ENCODE measurements at regions of chr18 and their contacts with region 1.

Region 1: DNA sequence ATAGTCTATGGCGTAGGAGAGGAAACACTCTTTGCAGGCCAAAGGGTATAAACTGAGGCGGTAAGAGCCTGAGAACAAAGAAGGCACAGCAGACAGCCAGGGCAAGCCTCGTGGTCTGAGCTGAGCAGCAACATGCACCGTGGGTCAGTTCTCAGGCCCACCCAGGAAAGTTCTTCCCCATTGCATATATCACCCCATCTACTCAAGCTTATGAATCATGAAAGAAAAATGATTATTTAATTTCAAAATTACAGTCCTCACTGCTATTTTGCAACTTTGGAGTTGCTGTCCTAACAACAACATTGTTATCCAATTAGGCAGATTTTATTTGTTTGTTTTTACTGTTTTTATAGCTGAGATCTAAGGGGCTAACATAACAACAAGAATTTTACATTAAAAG is 54.7 kb upstream of the RIOK3 start:
- DNase-seq: no peak
- ATAC-seq: no peak
- H3K4me3 ChIP-seq: no peak overlapping the region
- H3K27ac ChIP-seq: no peak overlapping the region
- H3K4me1 ChIP-seq: peaks cover 0 to 3% of the 10 kb centered on the region in 2 donors
- H3K27me3 ChIP-seq: no peaks in the 10 kb centered on the region
- CTCF ChIP-seq: no peak

Region 2: DNA sequence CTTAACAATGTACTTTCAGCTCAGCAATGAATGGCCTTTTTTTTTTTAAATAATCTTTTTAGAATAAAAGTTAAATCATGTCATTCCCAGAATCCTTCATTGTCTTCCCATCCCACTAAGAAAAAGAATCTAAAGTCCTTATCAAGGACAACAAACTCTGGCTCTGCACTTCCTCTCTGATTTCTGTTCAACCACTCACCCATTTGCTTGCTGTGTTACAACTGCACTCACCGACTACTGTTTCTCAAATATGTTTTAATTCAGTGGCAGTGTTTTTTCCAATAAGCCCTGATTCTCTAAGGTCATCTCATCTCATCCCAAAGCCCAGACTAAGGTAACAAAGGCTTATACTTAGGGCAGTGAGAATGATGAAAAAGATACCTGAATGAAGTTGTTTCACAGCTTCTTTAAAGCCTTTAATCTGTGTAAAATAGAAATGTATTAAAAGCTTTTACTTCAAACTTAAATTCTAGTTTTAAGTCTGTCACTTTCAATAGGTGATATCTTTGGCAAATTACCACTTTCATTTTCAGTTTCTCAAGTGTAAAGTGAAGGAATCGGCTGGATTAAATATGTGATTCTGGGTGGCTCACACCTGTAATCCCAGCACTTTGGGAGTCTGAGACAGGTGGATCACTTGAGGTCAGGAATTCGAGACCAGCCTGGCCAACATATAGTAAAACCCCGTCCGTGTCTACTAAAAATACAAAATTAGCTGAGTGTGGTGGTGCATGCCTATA is 377.7 kb before region 1 on chr18:
- intact Hi-C with region 1: loop called in 1 of 2 experiments (anchors 10 kb)
- DNase-seq: no peak
- ATAC-seq: peak; percentile 19
- H3K4me3 ChIP-seq: no peak overlapping the region
- H3K27ac ChIP-seq: peak overlapping the region in 1 of 2 donors; percentile 13
- H3K4me1 ChIP-seq: peaks cover 0 to 5% of the 10 kb centered on the region in 2 donors
- H3K27me3 ChIP-seq: no peaks in the 10 kb centered on the region
- CTCF ChIP-seq: no peak

Region 3: DNA sequence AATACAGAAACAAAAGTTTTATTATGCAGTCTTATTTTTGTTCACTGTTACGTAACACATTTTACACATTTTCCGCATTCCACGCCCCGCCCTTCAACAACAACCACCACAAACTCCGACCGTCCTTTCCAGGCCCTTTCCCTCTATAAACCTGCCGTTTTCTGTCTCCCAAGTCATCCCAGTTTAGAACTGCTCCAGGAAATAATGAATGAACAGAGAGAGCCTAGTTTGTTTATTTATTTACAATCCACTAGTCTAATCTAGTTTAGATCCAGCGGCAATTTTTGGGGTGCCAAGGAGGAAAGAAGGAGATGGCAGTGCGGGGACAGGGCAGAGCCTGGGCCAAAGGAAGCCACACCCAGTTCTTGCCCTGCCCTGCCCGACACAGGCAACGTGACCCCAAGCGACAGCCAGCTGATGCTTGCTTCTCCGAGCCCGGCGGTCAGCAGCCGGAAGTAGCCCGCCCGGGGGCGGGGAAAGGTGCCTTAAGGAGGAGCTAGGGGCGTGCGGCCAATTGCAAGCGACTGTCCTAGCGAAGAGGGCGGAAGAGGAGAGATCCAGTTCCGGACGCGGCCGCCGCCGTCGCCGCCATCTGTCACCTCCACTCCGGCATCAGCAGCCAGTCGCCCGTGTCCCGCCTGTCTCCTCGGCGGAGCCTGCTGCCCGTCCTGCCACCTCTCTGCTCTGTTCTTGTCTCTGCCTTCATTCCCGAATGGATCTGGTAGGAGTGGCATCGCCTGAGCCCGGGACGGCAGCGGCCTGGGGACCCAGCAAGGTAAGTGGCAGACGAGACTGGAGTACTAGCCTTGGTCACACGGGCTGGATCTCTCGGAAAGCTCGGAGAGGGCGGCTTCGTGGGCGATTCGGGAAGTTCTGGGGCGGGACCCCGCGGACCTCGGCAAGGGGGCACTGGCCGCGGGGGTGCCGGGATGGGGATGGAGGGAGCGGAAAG is 54.6 kb after region 1 on chr18 and contains the start of gene RIOK3:
- intact Hi-C with region 1: no loop called
- DNase-seq: peak; percentile 95 to 100 (median 98)
- ATAC-seq: peak; percentile 97
- H3K4me3 ChIP-seq: peak within 1 kb of the TSS; percentile 84 to 91
- H3K27ac ChIP-seq: peak within 1 kb of the TSS; percentile 92 to 96
- H3K4me1 ChIP-seq: peaks cover 16 to 52% of the 10 kb centered on the region in 2 donors
- H3K27me3 ChIP-seq: no peaks in the 10 kb centered on the region
- CTCF ChIP-seq: peak in 1 of 2 donors; percentile 2
- polyA plus RNA-seq, gene RIOK3: 62.4 to 79.7 (median 70.9) TPM